GM10248 (cell line): ENCODE measurements at regions of chr4 and their contacts with region 1.

Region 1: GRCh38 chr4:52648836-52649235 is 10.3 kb downstream of the USP46 start:
- DNase-seq: no peak
- CTCF ChIP-seq: no peak

Region 2: DNA sequence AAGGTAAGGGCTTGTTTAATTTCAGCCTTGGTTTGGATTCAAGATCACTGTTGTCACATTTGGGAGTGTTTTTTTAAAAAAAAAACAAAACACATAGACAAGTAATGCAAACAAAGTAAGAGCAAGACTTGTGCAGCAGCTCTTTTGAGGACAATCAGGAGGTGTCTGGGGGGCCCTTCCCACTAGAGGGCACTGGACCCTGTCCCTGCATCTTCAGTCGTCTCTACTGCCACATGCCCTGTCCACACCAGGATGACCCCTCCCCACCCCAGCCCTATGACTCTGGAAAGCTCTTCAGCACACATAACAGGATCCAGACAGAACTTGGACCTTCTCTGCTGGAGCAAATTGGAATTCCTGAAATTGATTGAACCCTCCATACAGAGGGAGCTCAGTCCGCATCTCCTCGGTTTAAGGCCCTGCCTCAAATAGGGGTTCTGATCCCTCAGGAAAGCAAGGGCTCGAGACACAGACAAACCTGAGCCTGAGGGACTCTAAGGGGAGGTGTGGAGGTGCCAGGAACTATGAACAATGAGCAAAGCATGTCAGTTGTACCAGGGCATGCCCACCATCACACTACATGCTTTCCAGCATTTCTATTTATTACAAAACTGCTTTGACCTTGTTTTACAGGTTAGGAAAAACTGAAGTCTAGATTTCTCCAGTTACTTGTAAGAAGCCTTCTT is 60.6 kb before region 1 on chr4:
- CTCF ChIA-PET with region 1: no interaction called
- POLR2A ChIA-PET with region 1: no interaction called
- DNase-seq: peak; percentile 43
- CTCF ChIP-seq: peak; percentile 46

Region 3: DNA sequence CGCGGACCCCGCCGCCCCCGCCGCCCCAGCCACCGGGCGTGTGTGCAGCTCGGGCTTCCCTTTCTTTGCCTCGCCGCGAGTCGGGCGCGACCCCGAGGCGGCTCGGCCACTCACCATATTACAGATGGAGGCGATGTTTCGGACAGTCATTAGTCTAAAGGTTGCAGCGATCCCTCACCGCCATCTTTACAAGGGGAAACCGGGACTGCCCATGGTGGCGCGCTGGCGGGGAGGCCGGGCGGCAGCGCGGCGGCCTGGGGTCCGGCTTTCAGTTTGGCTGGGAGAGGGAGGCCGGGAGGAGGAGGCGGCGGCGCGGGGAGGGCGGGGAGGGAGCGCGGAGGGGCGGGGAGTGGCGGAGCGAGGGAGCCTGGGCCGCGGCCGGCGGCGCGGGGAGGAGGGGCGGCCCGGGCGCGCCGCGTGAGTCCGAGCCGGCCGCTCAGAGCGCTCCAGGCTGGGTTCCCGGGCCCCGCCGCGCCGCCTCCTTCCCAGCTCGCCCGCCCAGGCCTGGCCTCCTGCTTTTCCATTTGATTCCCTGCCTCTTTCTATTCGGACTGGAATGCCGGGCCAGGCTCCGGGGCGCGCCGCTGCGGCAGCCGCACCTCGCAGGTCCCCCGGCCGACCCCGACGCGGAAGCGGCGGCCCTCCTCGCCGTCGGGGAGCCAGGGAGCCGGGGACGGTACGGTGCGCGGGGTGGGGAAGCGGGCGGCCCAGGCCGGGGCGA is 10.3 kb after region 1 on chr4 and contains the start of gene USP46:
- CTCF ChIA-PET with region 1: interaction called, 14 read pairs
- POLR2A ChIA-PET with region 1: interaction called, 5 read pairs
- DNase-seq: peak; percentile 92
- CTCF ChIP-seq: no peak

Region 4: DNA sequence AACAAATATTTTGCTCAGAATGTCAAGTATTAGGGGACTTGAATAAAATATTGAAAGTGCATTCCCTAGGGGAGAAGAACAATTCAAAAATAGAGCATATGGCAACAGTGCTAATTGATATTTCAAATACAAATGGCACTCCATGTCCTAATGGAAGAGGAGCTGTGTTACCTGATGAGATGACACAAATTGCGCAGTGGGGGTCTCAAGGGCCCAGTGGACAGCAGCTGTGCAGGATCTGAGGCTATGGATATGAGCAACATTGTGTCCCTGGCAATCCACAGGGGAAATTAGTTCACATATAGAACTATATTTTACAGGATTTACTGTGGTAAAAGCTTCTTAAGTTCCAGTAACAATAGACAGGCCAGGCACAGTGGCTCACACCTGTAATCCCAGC is 27.7 kb after region 1 on chr4:
- CTCF ChIA-PET with region 1: no interaction called
- POLR2A ChIA-PET with region 1: no interaction called
- DNase-seq: no peak
- CTCF ChIP-seq: no peak